ENCODE measurements at regions of chr4 and their contacts with region 1.

Region 1: GRCh38 chr4:148396986-148397673 is 45.1 kb downstream of the NR3C2 start:
- DNase-seq: no peak
- ATAC-seq: no peak
- H3K4me3 ChIP-seq: no peak overlapping the region
- H3K4me3 Mint-ChIP-seq: no peak overlapping the region
- H3K27ac ChIP-seq: no peak overlapping the region
- H3K27ac Mint-ChIP-seq: no peak overlapping the region
- H3K4me1 ChIP-seq: peaks cover 0 to 3% of the 10 kb centered on the region in 2 experiments
- H3K4me1 Mint-ChIP-seq: peaks cover 50 to 59% (median 50%) of the 10 kb centered on the region in 3 donors
- H3K27me3 ChIP-seq: no peaks in the 10 kb centered on the region
- H3K27me3 Mint-ChIP-seq: no peaks in the 10 kb centered on the region

Region 2: GRCh38 chr4:148203056-148203898 is 193.9 kb before region 1 on chr4:
- CTCF ChIA-PET with region 1: no interaction called
- POLR2A ChIA-PET with region 1: interaction called in 1 of 2 experiments, 13 read pairs
- DNase-seq: no peak
- ATAC-seq: no peak
- H3K4me3 ChIP-seq: no peak overlapping the region
- H3K4me3 Mint-ChIP-seq: no peak overlapping the region
- H3K27ac ChIP-seq: no peak overlapping the region
- H3K27ac Mint-ChIP-seq: no peak overlapping the region
- H3K4me1 ChIP-seq: no peaks in the 10 kb centered on the region
- H3K4me1 Mint-ChIP-seq: peaks cover 15 to 37% (median 24%) of the 10 kb centered on the region in 3 donors
- H3K27me3 ChIP-seq: no peaks in the 10 kb centered on the region
- H3K27me3 Mint-ChIP-seq: no peaks in the 10 kb centered on the region